Ovary (tissue), 10 donors: ENCODE measurements at regions of chr2 and their contacts with region 1.

Region 1: GRCh38 chr2:53028259-53028658 is 739.3 kb upstream of the CHAC2 start:
- DNase-seq: no peak
- H3K4me3 ChIP-seq: no peak overlapping the region
- H3K27ac ChIP-seq: no peak overlapping the region
- H3K4me1 ChIP-seq: no peaks in the 10 kb centered on the region
- H3K27me3 ChIP-seq: no peaks in the 10 kb centered on the region
- CTCF ChIP-seq: no peak
- EP300 ChIP-seq: no peak
- POLR2A ChIP-seq: no peak

Region 2: DNA sequence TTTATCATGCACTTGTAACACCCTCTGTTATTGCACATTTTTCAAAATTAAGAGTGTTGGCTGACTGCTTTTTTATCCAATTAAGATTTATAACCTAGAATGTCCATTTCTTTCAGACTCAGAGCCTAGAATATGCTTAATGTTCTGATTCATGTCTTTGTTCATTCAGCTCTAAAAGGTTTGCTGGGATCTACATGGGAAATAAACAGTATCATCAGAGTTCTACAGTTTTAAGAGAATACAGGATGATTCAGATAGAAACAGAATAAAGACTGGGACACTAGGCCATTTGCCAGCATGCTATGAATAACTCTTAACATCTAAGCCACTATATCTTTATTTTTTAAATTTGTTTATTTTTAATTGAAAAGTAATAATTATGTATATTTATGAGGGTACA is 25.7 kb after region 1 on chr2:
- intact Hi-C with region 1: loop called in 1 of 4 experiments (anchors 2 kb)
- DNase-seq: no peak
- H3K4me3 ChIP-seq: no peak overlapping the region
- H3K27ac ChIP-seq: no peak overlapping the region
- H3K4me1 ChIP-seq: no peaks in the 10 kb centered on the region
- H3K27me3 ChIP-seq: no peaks in the 10 kb centered on the region
- CTCF ChIP-seq: no peak
- EP300 ChIP-seq: no peak
- POLR2A ChIP-seq: no peak

Region 3: GRCh38 chr2:53242090-53242489 is 213.8 kb after region 1 on chr2:
- intact Hi-C with region 1: no loop called
- DNase-seq: no peak
- H3K4me3 ChIP-seq: no peak overlapping the region
- H3K27ac ChIP-seq: no peak overlapping the region
- H3K4me1 ChIP-seq: no peaks in the 10 kb centered on the region
- H3K27me3 ChIP-seq: no peaks in the 10 kb centered on the region
- CTCF ChIP-seq: no peak
- EP300 ChIP-seq: no peak
- POLR2A ChIP-seq: no peak